ENCODE measurements at regions of chr16 and their contacts with region 1.

Region 1: GRCh38 chr16:19113453-19114351 is at the start of gene ITPRIPL2:
- DNase-seq: peak; percentile 92 to 96 (median 94)
- ATAC-seq: peak; percentile 88 to 94 (median 93)
- H3K4me3 ChIP-seq: peak within 1 kb of the TSS; percentile 59 to 94 (median 82)
- H3K27ac ChIP-seq: peak within 1 kb of the TSS; percentile 91 to 99 (median 96)
- H3K4me1 ChIP-seq: peaks cover 3 to 56% (median 42%) of the 10 kb centered on the region in 12 donors
- H3K27me3 ChIP-seq: peaks cover 0 to 8% (median 0%) of the 10 kb centered on the region in 9 donors
- CTCF ChIP-seq: peak in 2 of 12 donors; percentile 11 to 31
- POLR2A ChIP-seq: peak in 1 of 2 donors; percentile 48
- total RNA-seq, gene ITPRIPL2: 11.0 to 43.2 (median 16.3) TPM

Region 2: GRCh38 chr16:18816286-18816685 is 297.4 kb before region 1 on chr16:
- intact Hi-C with region 1: no loop called
- DNase-seq: no peak
- ATAC-seq: no peak
- H3K4me3 ChIP-seq: no peak overlapping the region
- H3K27ac ChIP-seq: no peak overlapping the region
- H3K4me1 ChIP-seq: peaks cover 0 to 4% (median 0%) of the 10 kb centered on the region in 12 donors
- H3K27me3 ChIP-seq: no peaks in the 10 kb centered on the region
- CTCF ChIP-seq: no peak
- POLR2A ChIP-seq: no peak

Region 3: DNA sequence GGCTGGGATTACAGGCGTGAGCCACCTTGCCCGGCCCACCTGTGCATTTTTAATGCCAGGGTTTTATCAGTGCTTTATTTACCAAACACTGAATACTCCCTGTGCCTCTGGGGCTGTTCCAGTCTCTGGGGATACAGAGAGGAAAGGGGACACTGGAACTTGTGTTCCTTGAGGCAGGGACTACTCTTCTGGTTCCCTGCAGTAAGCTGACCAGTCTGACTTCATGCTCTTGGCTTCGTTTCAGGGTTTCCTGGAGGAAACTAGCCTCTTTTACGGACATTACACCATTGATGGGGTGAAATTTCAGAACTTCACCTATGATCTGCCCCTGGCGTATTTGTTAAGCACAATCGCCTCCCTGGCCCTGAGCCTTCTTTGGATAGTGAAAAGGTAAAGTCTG is 83.7 kb before region 1 on chr16:
- intact Hi-C with region 1: no loop called
- DNase-seq: peak in 2 of 5 donors; percentile 25 to 29
- ATAC-seq: peak; percentile 38 to 90 (median 53)
- H3K4me3 ChIP-seq: no peak overlapping the region
- H3K27ac ChIP-seq: peak overlapping the region in 6 of 12 donors; percentile 0 to 55 (median 39)
- H3K4me1 ChIP-seq: peaks cover 0 to 16% (median 0%) of the 10 kb centered on the region in 12 donors
- H3K27me3 ChIP-seq: no peaks in the 10 kb centered on the region
- CTCF ChIP-seq: no peak
- POLR2A ChIP-seq: no peak

Region 4: GRCh38 chr16:19130852-19131810 is 17.4 kb after region 1 on chr16:
- intact Hi-C with region 1: loop called in 2 of 10 experiments (anchors 2 kb)
- DNase-seq: peak; percentile 66 to 80 (median 72)
- ATAC-seq: peak; percentile 68 to 91 (median 82)
- H3K4me3 ChIP-seq: peak overlapping the region in 7 of 12 donors; percentile 4 to 27 (median 18)
- H3K27ac ChIP-seq: peak overlapping the region; percentile 67 to 94 (median 86)
- H3K4me1 ChIP-seq: peaks cover 0 to 72% (median 39%) of the 10 kb centered on the region in 12 donors
- H3K27me3 ChIP-seq: no peaks in the 10 kb centered on the region
- CTCF ChIP-seq: no peak
- POLR2A ChIP-seq: no peak